Activated T-helper 2 cell treated with anti-CD3 and anti-CD28 coated beads, Interferon-gamma antibody, Interleukin-2, Interleukin-4, amounts not matched to agents 10 μg/mL and 5 μg/mL and 100 μg/mL, durations not matched to agents 14 hours and 24 hours and 36 hours (primary cell): ENCODE measurements at regions of chr19 and their contacts with region 1.

Region 1: GRCh38 chr19:57389730-57390598 is at the start of gene ZNF548:
- DNase-seq: peak; percentile 94
- H3K4me3 Mint-ChIP-seq: peak within 1 kb of the TSS; percentile 86
- H3K27ac Mint-ChIP-seq: peak within 1 kb of the TSS; percentile 78
- H3K4me1 Mint-ChIP-seq: peaks cover 18% of the 10 kb centered on the region
- H3K27me3 Mint-ChIP-seq: no peaks in the 10 kb centered on the region
- total RNA-seq, gene ZNF548: 10.5 and 12.5 TPM in 2 replicates

Region 2: GRCh38 chr19:57320180-57321084 is 69.5 kb before region 1 on chr19 and contains the start of gene ZNF543:
- intact Hi-C with region 1: loop called (anchors 1 kb)
- DNase-seq: peak; percentile 89
- H3K4me3 Mint-ChIP-seq: peak within 1 kb of the TSS; percentile 85
- H3K27ac Mint-ChIP-seq: peak within 1 kb of the TSS; percentile 91
- H3K4me1 Mint-ChIP-seq: peaks cover 25% of the 10 kb centered on the region
- H3K27me3 Mint-ChIP-seq: peaks cover 11% of the 10 kb centered on the region
- total RNA-seq, gene ZNF543: 4.6 and 5.1 TPM in 2 replicates

Region 3: DNA sequence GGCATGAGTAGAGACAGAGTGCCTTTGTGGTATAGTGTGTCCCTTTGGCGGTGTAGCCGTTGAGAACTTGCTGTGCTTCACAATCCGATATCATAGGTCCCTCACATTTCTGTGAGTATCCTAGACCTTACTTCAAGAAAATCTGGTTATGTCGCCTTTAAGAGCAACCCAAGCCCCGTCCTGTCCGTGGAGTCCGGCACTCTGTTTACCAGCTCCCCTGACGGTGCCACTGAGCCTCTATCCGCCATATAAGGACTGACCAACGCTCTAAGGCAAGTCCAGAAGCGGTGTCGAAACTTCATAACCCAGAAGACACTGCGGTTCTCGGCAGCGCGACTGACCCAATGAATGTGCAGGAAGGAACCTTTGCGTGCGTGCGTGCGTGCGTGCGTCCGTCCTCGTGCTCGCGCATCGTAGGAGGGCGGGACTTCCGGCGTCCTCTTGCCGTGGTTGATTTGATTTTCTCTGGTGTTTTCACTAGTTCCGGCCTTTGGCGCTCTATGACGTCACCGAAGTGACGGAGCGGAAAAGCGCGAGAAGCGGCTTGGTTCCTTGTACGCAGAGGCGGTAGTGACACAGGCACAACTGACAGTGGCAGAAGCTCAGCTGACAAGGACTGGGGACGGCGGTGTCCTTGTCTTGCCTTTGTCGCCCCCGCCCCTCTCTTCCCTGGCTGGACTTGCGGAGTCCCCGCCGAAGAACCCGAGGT is 26.8 kb before region 1 on chr19 and contains the starts of genes TRAPPC2B and ZNF547:
- intact Hi-C with region 1: loop called (anchors 1 kb)
- DNase-seq: peak; percentile 98
- H3K4me3 Mint-ChIP-seq: peak within 1 kb of the TSS; percentile 82
- H3K27ac Mint-ChIP-seq: peak within 1 kb of the TSS; percentile 96
- H3K4me1 Mint-ChIP-seq: peaks cover 12% of the 10 kb centered on the region
- H3K27me3 Mint-ChIP-seq: no peaks in the 10 kb centered on the region
- total RNA-seq, gene TRAPPC2B: 3.8 and 4.1 TPM in 2 replicates
- total RNA-seq, gene ZNF547: 1.3 and 2.0 TPM in 2 replicates

Region 4: GRCh38 chr19:57435062-57435978 is 45.4 kb after region 1 on chr19 and contains the start of gene ZNF749:
- intact Hi-C with region 1: loop called (anchors 1 kb)
- DNase-seq: peak; percentile 96
- H3K4me3 Mint-ChIP-seq: peak within 1 kb of the TSS; percentile 98
- H3K27ac Mint-ChIP-seq: peak within 1 kb of the TSS; percentile 96
- H3K4me1 Mint-ChIP-seq: peaks cover 16% of the 10 kb centered on the region
- H3K27me3 Mint-ChIP-seq: no peaks in the 10 kb centered on the region
- total RNA-seq, gene ZNF749: 21.0 and 21.5 TPM in 2 replicates

Region 5: GRCh38 chr19:57947208-57948134 is 557.5 kb after region 1 on chr19 and contains the start of gene ZNF256:
- intact Hi-C with region 1: loop called (anchors 1 kb)
- DNase-seq: peak; percentile 80
- H3K4me3 Mint-ChIP-seq: peak within 1 kb of the TSS; percentile 90
- H3K27ac Mint-ChIP-seq: peak within 1 kb of the TSS; percentile 82
- H3K4me1 Mint-ChIP-seq: peaks cover 11% of the 10 kb centered on the region
- H3K27me3 Mint-ChIP-seq: no peaks in the 10 kb centered on the region
- total RNA-seq, gene ZNF256: 2.7 and 3.0 TPM in 2 replicates